ENCODE measurements at regions of chr16 and their contacts with region 1.

Region 1: DNA sequence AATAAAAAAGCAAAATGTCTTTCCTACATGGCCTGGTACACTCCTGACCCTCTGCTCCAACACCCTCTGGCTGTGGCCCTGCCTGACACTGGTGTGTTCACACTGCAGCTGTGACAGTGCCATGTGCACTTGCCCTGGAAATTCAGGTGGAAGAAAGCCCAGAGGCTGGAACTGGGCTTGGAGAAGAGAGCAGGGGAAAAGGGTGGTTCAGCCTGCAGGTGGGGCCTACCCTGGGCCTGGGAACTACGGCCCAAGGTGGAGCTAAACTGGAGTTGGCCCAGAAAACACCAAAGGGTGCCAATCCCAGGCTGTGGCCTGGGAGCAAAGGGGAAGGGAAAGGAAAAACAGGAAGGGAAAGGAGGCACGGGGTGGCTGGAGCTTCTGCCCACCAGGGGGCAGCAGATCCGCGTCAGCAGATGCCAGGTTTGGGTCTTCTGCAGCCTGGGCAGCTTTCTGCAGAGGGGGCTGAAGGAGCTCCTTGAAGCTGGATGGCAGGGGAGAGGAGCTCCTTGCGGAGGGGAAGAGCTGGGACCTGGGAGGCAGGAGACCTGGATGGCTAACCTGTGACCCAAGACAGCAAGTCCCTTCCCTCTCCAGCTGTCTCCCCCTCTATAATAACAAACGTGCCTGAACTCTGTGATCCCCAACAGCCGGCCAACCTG is 15.4 kb upstream of the CTCF start:
- H3K4me3 ChIP-seq: no peak overlapping the region
- H3K27ac ChIP-seq: no peak overlapping the region
- H3K4me1 ChIP-seq: no peaks in the 10 kb centered on the region
- CTCF ChIP-seq: peak; percentile 98

Region 2: DNA sequence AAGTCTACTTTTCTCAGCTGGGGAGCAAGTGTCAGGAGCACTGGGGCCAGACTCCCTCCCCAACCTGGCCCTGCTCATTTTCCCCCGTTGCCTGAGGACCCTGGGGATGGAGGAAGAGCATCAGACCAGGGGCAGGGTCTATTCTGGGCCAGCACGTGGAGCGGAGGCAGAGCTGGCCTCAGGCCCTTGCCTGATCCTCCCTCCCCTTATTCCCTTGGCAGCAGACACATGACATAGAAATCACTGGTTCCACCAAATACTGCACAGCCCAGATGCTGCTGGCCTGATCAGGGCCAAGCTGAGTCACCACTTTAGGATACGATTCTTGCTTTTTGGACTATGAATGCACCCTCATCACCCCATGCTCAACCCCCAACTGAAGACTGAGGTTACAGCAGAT is 47.8 kb before region 1 on chr16:
- CTCF ChIA-PET with region 1: no interaction called
- POLR2A ChIA-PET with region 1: no interaction called
- H3K4me3 ChIP-seq: no peak overlapping the region
- H3K27ac ChIP-seq: no peak overlapping the region
- H3K4me1 ChIP-seq: no peaks in the 10 kb centered on the region
- CTCF ChIP-seq: no peak

Region 3: GRCh38 chr16:67530013-67530939 is 16.6 kb before region 1 on chr16:
- CTCF ChIA-PET with region 1: interaction called, 10 read pairs
- POLR2A ChIA-PET with region 1: interaction called, 4 read pairs
- H3K4me3 ChIP-seq: peak overlapping the region; percentile 56
- H3K27ac ChIP-seq: no peak overlapping the region; the same call in 1 of the 2 replicates
- H3K4me1 ChIP-seq: no peaks in the 10 kb centered on the region
- CTCF ChIP-seq: no peak

Region 4: GRCh38 chr16:67561824-67562525 is 15.1 kb after region 1 on chr16:
- CTCF ChIA-PET with region 1: interaction called, 23 read pairs
- POLR2A ChIA-PET with region 1: interaction called, 14 read pairs
- H3K4me3 ChIP-seq: peak overlapping the region; percentile 98
- H3K27ac ChIP-seq: peak overlapping the region; percentile 100
- H3K4me1 ChIP-seq: peaks cover 9% of the 10 kb centered on the region; the same call in 1 of the 2 replicates
- CTCF ChIP-seq: no peak

Region 5: DNA sequence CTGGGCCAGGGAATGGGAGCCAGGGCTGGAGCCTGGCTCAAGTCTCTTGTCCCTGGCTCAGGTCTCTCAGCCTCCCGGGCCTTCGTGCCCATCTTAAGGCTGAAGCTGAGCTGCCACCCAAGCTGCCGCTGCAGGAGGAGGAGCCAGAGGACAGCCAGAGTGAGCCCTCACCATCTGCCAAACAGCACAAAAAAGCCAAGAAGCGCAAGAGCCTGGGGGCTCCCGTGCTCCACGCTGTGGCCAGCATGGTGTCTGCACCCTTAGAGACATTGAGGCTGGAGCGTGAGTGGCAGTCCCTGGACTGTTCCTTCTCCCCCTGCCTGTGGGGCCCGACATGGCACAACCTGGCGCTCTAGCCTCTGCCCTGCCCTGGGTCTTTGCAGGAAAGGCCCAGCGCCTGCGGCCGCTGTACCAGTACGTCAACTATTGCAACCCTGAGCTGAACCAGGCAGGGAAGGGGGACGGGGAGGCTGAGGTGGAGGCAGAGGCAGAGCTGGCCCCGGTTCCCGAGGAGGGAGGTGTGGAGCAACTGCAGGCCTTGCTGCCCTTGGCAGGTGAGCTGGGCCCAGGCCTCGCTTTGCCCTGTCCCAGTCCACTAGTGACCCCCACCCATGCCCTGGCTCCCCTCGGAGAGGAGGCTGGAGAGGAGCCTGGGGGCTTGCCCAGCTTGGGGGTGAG is 121.1 kb after region 1 on chr16:
- CTCF ChIA-PET with region 1: interaction called, 19 read pairs
- POLR2A ChIA-PET with region 1: no interaction called
- H3K4me3 ChIP-seq: no peak overlapping the region
- H3K27ac ChIP-seq: no peak overlapping the region
- H3K4me1 ChIP-seq: no peaks in the 10 kb centered on the region
- CTCF ChIP-seq: peak; percentile 96

Measured in HEK293 (cell line).